Activated CD4-positive, alpha-beta memory T cell treated with anti-CD3 and anti-CD28 coated beads, Interleukin-2, amount 10 ng/mL, durations not matched to agents 7 days and 5 days (primary cell): ENCODE measurements at regions of chr4 and their contacts with region 1.

Region 1: DNA sequence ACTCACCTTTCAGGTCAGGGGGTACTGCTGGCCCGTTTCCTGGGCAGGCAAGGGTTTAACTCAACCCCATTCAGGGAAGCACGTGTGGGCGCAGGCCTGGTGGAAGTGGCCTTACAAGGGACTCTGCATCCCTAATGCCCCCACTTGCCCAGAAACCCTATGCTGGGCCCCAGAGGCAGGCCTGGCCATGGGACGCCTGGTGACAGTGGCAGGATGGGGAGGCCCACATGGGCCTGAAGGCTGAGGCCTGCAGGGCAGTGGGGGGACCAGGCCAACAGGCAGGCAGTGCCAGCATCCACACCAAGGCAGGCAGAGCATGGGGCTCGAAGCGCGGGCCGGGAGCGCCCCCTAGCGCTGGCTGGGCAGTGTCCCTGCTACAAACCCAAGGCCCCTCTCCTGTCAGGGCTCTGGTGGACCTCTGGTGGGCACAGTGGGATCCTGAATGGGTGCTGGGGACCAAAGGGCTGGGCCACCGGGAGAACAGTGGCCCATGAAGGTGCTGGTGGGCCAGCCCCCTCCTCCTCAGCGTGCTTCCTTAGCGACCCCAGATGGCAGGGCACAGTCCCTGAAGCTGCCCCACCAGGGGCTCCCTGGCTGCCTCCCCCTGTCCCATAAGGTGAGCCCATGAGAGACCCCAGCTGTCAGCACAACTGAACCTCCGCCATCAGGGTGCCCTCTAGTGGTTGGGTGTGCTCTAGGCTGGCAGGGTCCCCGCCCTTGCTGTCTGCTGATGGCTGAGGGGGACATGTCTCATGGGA is 16.8 kb downstream of the FGFR3 start:
- DNase-seq: peak; percentile 79
- H3K4me3 Mint-ChIP-seq: no peak overlapping the region
- H3K27ac Mint-ChIP-seq: no peak overlapping the region
- H3K4me1 Mint-ChIP-seq: no peaks in the 10 kb centered on the region
- H3K27me3 Mint-ChIP-seq: no peaks in the 10 kb centered on the region

Region 2: GRCh38 chr4:1746265-1746691 is 63.7 kb before region 1 on chr4:
- CTCF ChIA-PET with region 1: interaction called, 34 read pairs
- POLR2A ChIA-PET with region 1: interaction called, 3 read pairs
- DNase-seq: peak; percentile 79
- H3K4me3 Mint-ChIP-seq: no peak overlapping the region
- H3K27ac Mint-ChIP-seq: no peak overlapping the region
- H3K4me1 Mint-ChIP-seq: no peaks in the 10 kb centered on the region
- H3K27me3 Mint-ChIP-seq: no peaks in the 10 kb centered on the region

Region 3: GRCh38 chr4:1870578-1871443 is 60.9 kb after region 1 on chr4 and contains the start of gene NSD2:
- CTCF ChIA-PET with region 1: no interaction called
- POLR2A ChIA-PET with region 1: no interaction called
- DNase-seq: peak; percentile 90
- H3K4me3 Mint-ChIP-seq: peak within 1 kb of the TSS; percentile 99
- H3K27ac Mint-ChIP-seq: peak within 1 kb of the TSS; percentile 99
- H3K4me1 Mint-ChIP-seq: peaks cover 48% of the 10 kb centered on the region
- H3K27me3 Mint-ChIP-seq: no peaks in the 10 kb centered on the region
- total RNA-seq, gene NSD2: 235 to 248 TPM